ENCODE measurements at regions of chr17 and their contacts with region 1.

Region 1: DNA sequence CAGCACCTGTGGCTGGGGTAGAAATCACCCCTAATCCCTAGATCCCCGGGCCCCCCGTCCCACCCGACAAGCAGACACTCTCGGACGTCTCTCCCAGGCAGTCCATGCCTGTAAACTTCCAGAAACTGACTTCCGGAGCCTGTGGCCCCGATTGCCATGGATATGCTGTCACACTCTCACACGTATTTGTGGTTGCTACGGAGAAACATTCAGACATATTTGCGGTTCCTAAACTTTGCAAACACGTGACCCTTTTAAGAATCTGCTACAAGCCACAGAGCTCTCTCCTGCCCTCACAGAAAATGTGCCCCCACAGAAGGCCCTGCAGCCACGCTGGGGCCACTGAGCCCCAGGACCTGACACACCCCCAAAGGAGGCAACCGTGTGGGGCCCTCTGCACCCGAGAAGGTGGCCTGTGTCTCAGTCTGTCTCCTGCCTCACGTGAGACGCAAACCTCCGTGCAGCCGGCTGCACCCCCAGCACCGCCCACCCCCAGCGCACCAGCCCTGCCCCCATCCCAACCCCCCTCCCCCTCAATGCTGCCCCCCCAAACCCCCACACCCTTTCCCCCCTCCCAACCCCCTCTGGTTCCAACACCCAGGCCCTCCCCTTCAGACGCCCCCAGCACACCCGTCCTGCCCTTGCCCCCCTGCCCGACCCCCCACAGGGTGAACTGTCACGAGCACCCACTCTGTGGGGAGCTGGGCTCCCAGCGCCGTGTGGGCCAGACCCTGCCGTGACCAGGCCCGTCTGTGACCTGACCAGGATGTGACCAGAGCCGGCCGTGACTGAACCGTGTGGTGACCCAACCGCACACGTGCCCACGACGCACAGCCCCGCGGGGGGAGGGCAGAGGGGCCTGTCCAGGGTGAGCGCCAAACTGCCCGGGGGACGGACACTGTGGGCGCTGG is 66.3 kb upstream of the METRNL start:
- DNase-seq: no peak
- H3K4me3 ChIP-seq: no peak overlapping the region
- H3K27ac ChIP-seq: no peak overlapping the region
- H3K4me1 ChIP-seq: no peaks in the 10 kb centered on the region
- H3K27me3 ChIP-seq: no peaks in the 10 kb centered on the region
- CTCF ChIP-seq: no peak

Region 2: GRCh38 chr17:82804442-82805191 is 208.5 kb before region 1 on chr17:
- CTCF ChIA-PET with region 1: interaction called, 18 read pairs
- POLR2A ChIA-PET with region 1: no interaction called
- intact Hi-C with region 1: no loop called
- DNase-seq: no peak
- H3K4me3 ChIP-seq: no peak overlapping the region
- H3K27ac ChIP-seq: no peak overlapping the region
- H3K4me1 ChIP-seq: no peaks in the 10 kb centered on the region
- H3K27me3 ChIP-seq: no peaks in the 10 kb centered on the region
- CTCF ChIP-seq: no peak